Activated CD4-positive, alpha-beta T cell treated with anti-CD3 and anti-CD28 coated beads for 36 hours (primary cell): ENCODE measurements at regions of chr11 and their contacts with region 1.

Region 1: GRCh38 chr11:61792310-61793085 is at the starts of genes FEN1 and TMEM258:
- DNase-seq: peak; percentile 94
- ATAC-seq: peak; percentile 88
- H3K4me3 Mint-ChIP-seq: peak within 1 kb of the TSS; percentile 92
- H3K27ac Mint-ChIP-seq: peak within 1 kb of the TSS; percentile 98
- H3K4me1 Mint-ChIP-seq: peaks cover 44% of the 10 kb centered on the region
- H3K27me3 Mint-ChIP-seq: no peaks in the 10 kb centered on the region
- total RNA-seq, gene FEN1: 70.0 to 108 TPM
- total RNA-seq, gene TMEM258: 172 to 176 TPM

Region 2: GRCh38 chr11:61429691-61430582 is 362.6 kb before region 1 on chr11 and contains the starts of genes CPSF7 and SDHAF2:
- CTCF ChIA-PET with region 1: interaction called, 3 read pairs
- POLR2A ChIA-PET with region 1: no interaction called
- intact Hi-C with region 1: loop called in 1 of 2 experiments (anchors 1 kb)
- DNase-seq: peak; percentile 99
- ATAC-seq: peak; percentile 92
- H3K4me3 Mint-ChIP-seq: peak within 1 kb of the TSS; percentile 92
- H3K27ac Mint-ChIP-seq: peak within 1 kb of the TSS; percentile 97
- H3K4me1 Mint-ChIP-seq: peaks cover 59% of the 10 kb centered on the region
- H3K27me3 Mint-ChIP-seq: no peaks in the 10 kb centered on the region
- total RNA-seq, gene CPSF7: 108 to 179 TPM
- total RNA-seq, gene SDHAF2: 23.6 to 33.6 TPM

Region 3: GRCh38 chr11:61747192-61747966 is 45.1 kb before region 1 on chr11:
- CTCF ChIA-PET with region 1: interaction called, 6 read pairs
- POLR2A ChIA-PET with region 1: no interaction called
- intact Hi-C with region 1: loop called in 1 of 2 experiments (anchors 1 kb)
- DNase-seq: peak; percentile 75
- ATAC-seq: peak; percentile 63
- H3K4me3 Mint-ChIP-seq: no peak overlapping the region
- H3K27ac Mint-ChIP-seq: no peak overlapping the region
- H3K4me1 Mint-ChIP-seq: peaks cover 2% of the 10 kb centered on the region
- H3K27me3 Mint-ChIP-seq: peaks cover 17% of the 10 kb centered on the region

Region 4: GRCh38 chr11:61766353-61766841 is 26.1 kb before region 1 on chr11:
- CTCF ChIA-PET with region 1: no interaction called
- POLR2A ChIA-PET with region 1: no interaction called
- intact Hi-C with region 1: no loop called
- DNase-seq: no peak
- ATAC-seq: no peak
- H3K4me3 Mint-ChIP-seq: no peak overlapping the region
- H3K27ac Mint-ChIP-seq: no peak overlapping the region
- H3K4me1 Mint-ChIP-seq: no peaks in the 10 kb centered on the region
- H3K27me3 Mint-ChIP-seq: no peaks in the 10 kb centered on the region

Region 5: GRCh38 chr11:61816736-61817455 is 24.4 kb after region 1 on chr11 and contains the start of gene FADS1:
- CTCF ChIA-PET with region 1: interaction called, 115 read pairs
- POLR2A ChIA-PET with region 1: interaction called, 8 read pairs
- intact Hi-C with region 1: loop called (anchors 1 to 2 kb)
- DNase-seq: peak; percentile 92
- ATAC-seq: peak; percentile 67
- H3K4me3 Mint-ChIP-seq: peak within 1 kb of the TSS; percentile 89
- H3K27ac Mint-ChIP-seq: peak within 1 kb of the TSS; percentile 80
- H3K4me1 Mint-ChIP-seq: peaks cover 7% of the 10 kb centered on the region
- H3K27me3 Mint-ChIP-seq: peaks cover 25% of the 10 kb centered on the region
- total RNA-seq, gene FADS1: 18.9 to 23.7 TPM

Region 6: DNA sequence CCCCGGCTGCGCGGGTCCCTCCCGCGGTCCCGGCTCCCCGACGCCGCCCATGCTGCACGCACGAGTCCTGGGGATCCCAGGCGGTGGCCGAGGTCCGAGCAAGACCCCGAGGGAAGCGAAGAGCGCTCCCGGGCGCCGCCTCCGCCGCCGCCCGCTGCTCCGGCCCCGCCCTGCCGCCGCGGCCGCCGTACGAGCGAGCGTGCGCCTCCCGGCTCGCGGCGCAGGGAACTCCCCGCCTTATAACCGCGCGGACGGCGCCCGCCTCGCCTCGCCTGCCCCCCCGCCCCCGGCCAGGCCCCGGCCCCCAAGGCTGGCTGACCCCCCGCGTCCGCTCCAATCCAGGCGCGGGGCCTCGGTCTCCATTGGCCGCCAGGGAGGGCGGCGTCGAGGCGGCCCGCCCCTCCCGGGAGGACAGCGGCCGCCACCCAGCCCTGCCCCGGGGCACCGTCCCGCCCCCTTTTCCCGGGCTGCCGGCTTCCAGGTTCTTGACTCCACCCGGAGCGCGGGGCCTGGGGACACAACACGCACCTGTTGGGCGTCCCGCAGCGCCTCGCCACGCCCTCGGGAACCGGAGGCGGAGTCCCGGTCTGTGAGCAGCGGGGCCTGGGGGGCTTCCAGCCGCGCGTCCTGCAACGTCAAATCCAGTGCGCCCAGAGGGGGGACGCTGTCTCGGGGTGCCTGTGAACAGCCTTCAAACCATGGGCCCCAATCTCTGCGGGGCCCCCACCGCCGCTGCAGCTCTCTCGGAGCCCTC is 99.0 kb after region 1 on chr11 and contains the start of gene FADS3:
- CTCF ChIA-PET with region 1: interaction called, 34 read pairs
- POLR2A ChIA-PET with region 1: no interaction called
- intact Hi-C with region 1: loop called (anchors 1 to 5 kb)
- DNase-seq: peak; percentile 68
- ATAC-seq: peak; percentile 74
- H3K4me3 Mint-ChIP-seq: peak within 1 kb of the TSS; percentile 76
- H3K27ac Mint-ChIP-seq: peak within 1 kb of the TSS; percentile 58
- H3K4me1 Mint-ChIP-seq: peaks cover 2% of the 10 kb centered on the region
- H3K27me3 Mint-ChIP-seq: no peaks in the 10 kb centered on the region
- total RNA-seq, gene FADS3: 7.2 to 10.1 TPM

Region 7: GRCh38 chr11:61967116-61967923 is 174.8 kb after region 1 on chr11 and contains the start of gene FTH1:
- CTCF ChIA-PET with region 1: interaction called, 4 read pairs
- POLR2A ChIA-PET with region 1: interaction called, 3 read pairs
- intact Hi-C with region 1: loop called in 1 of 2 experiments (anchors 1 kb)
- DNase-seq: peak; percentile 93
- ATAC-seq: peak; percentile 76
- H3K4me3 Mint-ChIP-seq: peak within 1 kb of the TSS; percentile 91
- H3K27ac Mint-ChIP-seq: peak within 1 kb of the TSS; percentile 92
- H3K4me1 Mint-ChIP-seq: peaks cover 63% of the 10 kb centered on the region
- H3K27me3 Mint-ChIP-seq: no peaks in the 10 kb centered on the region
- total RNA-seq, gene FTH1: 777 to 914 TPM

Region 8: DNA sequence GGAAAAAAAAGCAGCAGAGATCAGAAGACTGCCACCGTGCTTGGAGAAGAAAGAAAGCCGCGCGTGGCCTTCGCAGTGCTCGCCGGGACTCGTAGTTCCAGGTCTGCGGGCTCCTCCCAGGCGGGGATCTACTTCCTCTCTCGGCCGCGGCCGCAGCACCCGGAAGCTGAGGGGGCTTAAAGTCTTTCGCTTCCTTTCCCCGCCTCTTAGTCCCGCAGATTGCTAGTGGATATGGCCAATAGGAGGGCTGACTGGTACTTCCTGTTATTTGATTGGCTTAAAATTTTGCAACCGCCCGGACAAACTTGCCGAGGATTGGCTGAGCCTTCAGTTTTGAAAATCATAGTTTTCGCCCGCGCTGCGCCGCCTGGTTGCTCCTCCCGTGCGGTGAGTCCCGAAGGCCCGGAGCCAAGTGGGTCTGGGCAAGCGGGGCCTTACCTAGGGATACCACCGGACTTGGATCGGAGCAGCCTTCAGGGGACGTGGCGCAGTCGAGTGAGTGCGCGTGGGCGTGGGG is 331.2 kb after region 1 on chr11 and contains the start of gene INCENP:
- CTCF ChIA-PET with region 1: no interaction called
- POLR2A ChIA-PET with region 1: no interaction called
- intact Hi-C with region 1: loop called (anchors 1 to 5 kb)
- DNase-seq: peak; percentile 97
- ATAC-seq: peak; percentile 98
- H3K4me3 Mint-ChIP-seq: peak within 1 kb of the TSS; percentile 98
- H3K27ac Mint-ChIP-seq: peak within 1 kb of the TSS; percentile 90
- H3K4me1 Mint-ChIP-seq: peaks cover 29% of the 10 kb centered on the region
- H3K27me3 Mint-ChIP-seq: no peaks in the 10 kb centered on the region
- total RNA-seq, gene INCENP: 125 to 140 TPM